Activated CD4-positive, alpha-beta memory T cell treated with anti-CD3 and anti-CD28 coated beads for 36 hours (primary cell): ENCODE measurements at regions of chr15 and their contacts with region 1.

Region 1: GRCh38 chr15:90886041-90886614 is 1.8 kb downstream of the FES start:
- DNase-seq: peak; percentile 86
- H3K4me3 Mint-ChIP-seq: peak overlapping the region; percentile 26
- H3K27ac Mint-ChIP-seq: peak overlapping the region; percentile 18
- H3K4me1 Mint-ChIP-seq: peaks cover 20% of the 10 kb centered on the region
- H3K27me3 Mint-ChIP-seq: peaks cover 6% of the 10 kb centered on the region

Region 2: GRCh38 chr15:90642464-90643300 is 243.4 kb before region 1 on chr15:
- CTCF ChIA-PET with region 1: interaction called, 65 read pairs
- POLR2A ChIA-PET with region 1: interaction called, 3 read pairs
- intact Hi-C with region 1: no loop called
- DNase-seq: no peak
- H3K4me3 Mint-ChIP-seq: no peak overlapping the region
- H3K27ac Mint-ChIP-seq: no peak overlapping the region
- H3K4me1 Mint-ChIP-seq: no peaks in the 10 kb centered on the region
- H3K27me3 Mint-ChIP-seq: no peaks in the 10 kb centered on the region

Region 3: GRCh38 chr15:90677807-90678790 is 208.0 kb before region 1 on chr15:
- CTCF ChIA-PET with region 1: interaction called, 12 read pairs
- POLR2A ChIA-PET with region 1: no interaction called
- intact Hi-C with region 1: no loop called
- DNase-seq: peak; percentile 25
- H3K4me3 Mint-ChIP-seq: peak overlapping the region; percentile 43
- H3K27ac Mint-ChIP-seq: peak overlapping the region; percentile 82
- H3K4me1 Mint-ChIP-seq: peaks cover 31% of the 10 kb centered on the region
- H3K27me3 Mint-ChIP-seq: no peaks in the 10 kb centered on the region

Region 4: DNA sequence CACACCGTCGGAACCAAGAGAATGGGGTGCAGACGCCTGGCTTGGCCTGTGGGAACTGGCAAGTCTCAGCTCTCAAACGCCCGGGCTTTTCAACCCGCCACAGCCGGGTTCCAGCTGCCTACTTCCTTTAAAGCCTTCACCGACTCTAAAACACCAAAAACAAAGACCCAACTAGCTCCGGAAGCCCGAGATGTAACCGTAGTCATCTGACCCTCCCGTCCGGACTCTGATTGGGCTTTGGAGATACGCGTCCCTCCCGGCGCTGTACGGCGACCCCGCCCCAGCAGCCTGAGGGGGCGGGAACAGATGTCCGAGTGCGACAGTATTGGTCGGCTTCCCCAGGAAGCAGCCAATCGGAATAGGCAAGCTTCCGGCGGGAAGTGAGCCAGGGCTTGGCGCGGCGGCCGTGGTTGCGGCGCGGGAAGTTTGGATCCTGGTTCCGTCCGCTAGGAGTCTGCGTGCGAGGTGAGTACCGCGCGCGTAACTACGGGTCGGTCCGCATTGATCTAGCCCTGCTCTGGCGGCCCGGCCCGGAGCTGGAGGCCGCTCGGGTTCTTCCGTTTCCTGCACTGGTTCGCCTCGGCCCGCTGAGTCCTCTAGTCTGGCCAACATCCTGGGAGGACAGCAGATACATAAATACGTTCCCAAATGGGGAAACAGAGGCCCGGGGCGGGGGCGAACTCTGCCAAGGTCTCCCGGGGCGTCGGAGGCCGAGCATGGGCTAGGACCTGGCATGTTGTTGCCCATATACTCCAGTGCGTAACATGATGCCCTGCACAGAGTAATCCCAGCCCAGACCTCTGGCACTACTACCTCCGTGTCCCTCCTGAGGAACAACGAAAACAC is 168.9 kb before region 1 on chr15 and contains the start of gene BLM:
- CTCF ChIA-PET with region 1: interaction called, 26 read pairs
- POLR2A ChIA-PET with region 1: interaction called, 3 read pairs
- intact Hi-C with region 1: loop called (anchors 5 kb)
- DNase-seq: peak; percentile 97
- H3K4me3 Mint-ChIP-seq: peak within 1 kb of the TSS; percentile 84
- H3K27ac Mint-ChIP-seq: peak within 1 kb of the TSS; percentile 91
- H3K4me1 Mint-ChIP-seq: peaks cover 24% of the 10 kb centered on the region
- H3K27me3 Mint-ChIP-seq: no peaks in the 10 kb centered on the region
- total RNA-seq, gene BLM: 65.6 to 68.7 TPM

Region 5: GRCh38 chr15:90818251-90819210 is 67.6 kb before region 1 on chr15:
- CTCF ChIA-PET with region 1: interaction called, 12 read pairs
- POLR2A ChIA-PET with region 1: interaction called, 5 read pairs
- intact Hi-C with region 1: no loop called
- DNase-seq: peak; percentile 62
- H3K4me3 Mint-ChIP-seq: peak overlapping the region; percentile 20
- H3K27ac Mint-ChIP-seq: peak overlapping the region; percentile 86
- H3K4me1 Mint-ChIP-seq: peaks cover 51% of the 10 kb centered on the region
- H3K27me3 Mint-ChIP-seq: no peaks in the 10 kb centered on the region

Region 6: DNA sequence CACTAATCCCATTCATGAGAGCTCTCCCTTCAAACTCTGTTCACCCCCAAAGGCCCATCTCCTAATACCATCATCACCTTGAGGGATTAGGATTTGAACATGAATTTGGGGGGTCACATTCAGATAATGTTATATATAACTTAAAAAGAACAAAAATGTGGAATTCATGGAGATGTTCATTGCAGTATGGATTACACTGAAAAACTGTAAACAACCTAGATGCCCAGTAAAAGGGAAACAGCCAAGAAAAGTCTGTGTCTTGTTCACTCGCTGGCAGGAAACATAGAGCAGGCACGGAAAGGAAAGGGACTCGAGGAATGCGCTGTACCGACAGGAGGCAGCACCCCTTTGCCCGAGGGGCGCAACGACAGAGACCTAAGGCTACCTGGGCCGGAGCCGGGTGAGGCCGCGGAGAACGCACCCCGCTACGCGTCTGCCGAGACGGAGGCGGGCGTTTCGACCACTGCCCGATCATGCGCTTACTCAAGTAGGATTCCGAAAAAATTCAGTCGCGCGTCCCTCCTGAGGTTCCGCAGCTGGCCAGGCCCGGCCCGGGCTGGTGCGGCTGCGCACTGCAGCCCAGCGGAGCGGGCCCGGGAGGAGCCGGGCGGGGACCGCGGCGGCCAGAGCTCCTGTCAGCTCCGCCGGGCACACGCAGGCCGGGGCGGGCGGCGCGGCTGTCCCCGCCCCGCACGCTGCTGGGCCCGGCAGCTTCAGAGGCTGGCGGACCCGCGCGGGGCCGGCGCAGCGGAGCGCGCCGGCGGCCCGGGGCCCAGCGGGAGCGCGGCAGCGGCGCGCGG is 16.1 kb after region 1 on chr15:
- CTCF ChIA-PET with region 1: interaction called, 38 read pairs
- POLR2A ChIA-PET with region 1: interaction called, 4 read pairs
- intact Hi-C with region 1: no loop called
- DNase-seq: peak; percentile 82
- H3K4me3 Mint-ChIP-seq: peak overlapping the region; percentile 83
- H3K27ac Mint-ChIP-seq: peak overlapping the region; percentile 88
- H3K4me1 Mint-ChIP-seq: peaks cover 25% of the 10 kb centered on the region
- H3K27me3 Mint-ChIP-seq: no peaks in the 10 kb centered on the region